Activated naive CD4-positive, alpha-beta T cell treated with anti-CD3 and anti-CD28 coated beads for 36 hours (primary cell): ENCODE measurements at regions of chr7 and their contacts with region 1.

Region 1: DNA sequence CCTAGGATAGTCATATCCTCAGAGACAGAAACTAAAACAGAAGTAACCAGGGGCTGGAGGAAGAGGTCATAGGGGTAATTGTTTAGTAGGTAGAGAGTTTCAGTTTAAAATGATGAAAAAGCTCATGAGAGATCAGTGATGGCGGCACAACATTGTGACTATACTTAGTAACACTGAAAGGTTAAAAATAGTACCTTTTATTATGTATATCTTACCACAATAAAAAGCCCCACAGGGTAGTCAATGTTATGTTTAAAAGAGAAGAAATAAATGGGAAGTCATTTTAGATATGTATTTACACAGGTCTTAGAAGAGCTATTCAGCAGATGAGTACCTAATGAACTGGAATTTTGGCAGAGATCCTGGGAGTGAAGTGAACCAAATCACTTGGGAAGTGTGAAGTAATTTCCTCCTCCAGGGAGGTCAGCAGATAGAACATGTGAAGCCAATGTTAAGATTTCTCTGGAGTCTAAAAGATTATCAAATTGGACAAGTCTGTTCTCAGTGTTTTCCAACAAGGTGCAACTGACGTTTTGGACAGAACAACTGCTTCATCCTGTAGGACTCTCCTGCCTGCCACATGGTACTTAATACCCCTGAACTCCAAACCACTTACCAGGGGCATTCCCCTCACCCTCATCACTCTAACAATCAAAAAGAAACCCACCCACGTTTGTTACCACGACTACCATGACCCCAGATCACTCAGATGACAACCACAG is 6.4 kb downstream of the CDCA7L start:
- DNase-seq: peak; percentile 84
- H3K4me3 Mint-ChIP-seq: peak overlapping the region; percentile 13
- H3K27ac Mint-ChIP-seq: peak overlapping the region; percentile 77
- H3K4me1 Mint-ChIP-seq: peaks cover 72% of the 10 kb centered on the region
- H3K27me3 Mint-ChIP-seq: no peaks in the 10 kb centered on the region

Region 2: DNA sequence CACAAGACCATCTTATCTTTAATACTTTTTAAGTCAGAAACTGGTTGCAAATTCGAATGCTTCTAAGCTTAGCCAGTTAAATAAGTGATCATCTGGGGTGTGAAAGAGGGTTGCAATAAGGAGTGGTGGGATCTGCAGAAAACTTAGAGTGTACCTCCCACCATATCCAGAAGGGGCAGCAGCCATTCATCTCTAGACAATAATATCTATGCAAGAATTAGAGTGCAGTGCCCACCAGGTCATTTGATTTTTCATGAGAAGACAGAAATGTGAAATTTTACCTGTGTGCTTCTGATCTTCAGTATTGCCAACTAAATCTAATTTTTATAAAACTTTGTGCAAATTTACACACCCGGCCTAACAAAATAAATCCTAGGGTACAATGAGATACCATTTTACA is 638.6 kb before region 1 on chr7:
- CTCF ChIA-PET with region 1: no interaction called
- intact Hi-C with region 1: loop called (anchors 2 kb)
- DNase-seq: no peak
- H3K4me3 Mint-ChIP-seq: no peak overlapping the region
- H3K27ac Mint-ChIP-seq: no peak overlapping the region
- H3K4me1 Mint-ChIP-seq: peaks cover 12% of the 10 kb centered on the region
- H3K27me3 Mint-ChIP-seq: no peaks in the 10 kb centered on the region

Region 3: GRCh38 chr7:21352540-21353387 is 586.5 kb before region 1 on chr7:
- CTCF ChIA-PET with region 1: no interaction called
- intact Hi-C with region 1: loop called (anchors 1 kb)
- DNase-seq: no peak
- H3K4me3 Mint-ChIP-seq: no peak overlapping the region
- H3K27ac Mint-ChIP-seq: peak overlapping the region; percentile 24
- H3K4me1 Mint-ChIP-seq: peaks cover 46% of the 10 kb centered on the region
- H3K27me3 Mint-ChIP-seq: no peaks in the 10 kb centered on the region

Region 4: GRCh38 chr7:21898265-21898930 is 40.9 kb before region 1 on chr7:
- CTCF ChIA-PET with region 1: no interaction called
- intact Hi-C with region 1: loop called (anchors 1 kb)
- DNase-seq: peak; percentile 25
- H3K4me3 Mint-ChIP-seq: peak overlapping the region; percentile 54
- H3K27ac Mint-ChIP-seq: peak overlapping the region; percentile 88
- H3K4me1 Mint-ChIP-seq: peaks cover 18% of the 10 kb centered on the region
- H3K27me3 Mint-ChIP-seq: no peaks in the 10 kb centered on the region

Region 5: DNA sequence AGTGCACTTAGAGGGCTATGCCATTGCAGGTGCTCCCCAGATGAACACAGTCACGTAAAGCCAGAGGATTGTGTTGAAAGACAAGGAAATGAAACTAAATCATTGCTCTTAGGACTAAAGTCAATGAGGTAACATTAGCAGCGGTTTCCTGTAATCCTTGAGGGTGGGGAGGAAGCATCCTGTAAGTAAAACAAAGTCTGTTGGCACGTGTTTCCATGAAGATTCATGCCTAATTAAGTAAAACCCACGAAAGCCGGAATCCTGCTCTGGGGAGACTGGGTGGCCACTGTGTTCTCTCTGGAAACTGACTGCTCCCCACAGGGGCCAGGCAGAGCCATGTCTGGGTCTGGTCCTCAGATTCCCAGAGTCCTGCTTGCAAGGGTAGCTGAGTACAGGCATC is 542.4 kb after region 1 on chr7:
- CTCF ChIA-PET with region 1: no interaction called
- intact Hi-C with region 1: loop called (anchors 1 kb)
- DNase-seq: peak; percentile 31
- H3K4me3 Mint-ChIP-seq: no peak overlapping the region
- H3K27ac Mint-ChIP-seq: no peak overlapping the region
- H3K4me1 Mint-ChIP-seq: peaks cover 7% of the 10 kb centered on the region
- H3K27me3 Mint-ChIP-seq: no peaks in the 10 kb centered on the region